Thyroid gland (tissue), 4 donors: ENCODE measurements at regions of chr3 and their contacts with region 1.

Region 1: DNA sequence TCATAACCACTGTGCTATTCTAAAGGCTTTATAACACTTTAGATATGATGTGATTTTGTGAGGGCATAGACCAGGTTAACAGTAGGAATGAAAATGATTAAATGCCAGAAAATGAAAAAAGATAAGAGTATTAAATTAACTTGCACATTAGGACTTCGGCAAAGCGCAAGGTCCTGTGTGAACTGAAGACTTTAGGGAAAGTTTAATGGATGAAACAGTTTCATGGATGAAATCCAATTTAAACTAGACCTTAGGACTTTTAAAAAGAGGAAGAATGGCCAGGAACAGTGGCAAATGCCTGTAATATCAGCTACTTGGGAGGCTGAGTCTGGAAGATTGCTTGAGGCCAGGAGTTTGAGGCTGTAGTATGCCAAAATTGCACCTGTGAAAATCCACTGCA is 8.7 kb downstream of the SLMAP start:
- DNase-seq: no peak
- H3K4me3 ChIP-seq: no peak overlapping the region
- H3K27ac ChIP-seq: no peak overlapping the region
- H3K4me1 ChIP-seq: peaks cover 12 to 17% of the 10 kb centered on the region in 2 donors
- H3K27me3 ChIP-seq: no peaks in the 10 kb centered on the region
- CTCF ChIP-seq: no peak
- POLR2A ChIP-seq: no peak

Region 2: DNA sequence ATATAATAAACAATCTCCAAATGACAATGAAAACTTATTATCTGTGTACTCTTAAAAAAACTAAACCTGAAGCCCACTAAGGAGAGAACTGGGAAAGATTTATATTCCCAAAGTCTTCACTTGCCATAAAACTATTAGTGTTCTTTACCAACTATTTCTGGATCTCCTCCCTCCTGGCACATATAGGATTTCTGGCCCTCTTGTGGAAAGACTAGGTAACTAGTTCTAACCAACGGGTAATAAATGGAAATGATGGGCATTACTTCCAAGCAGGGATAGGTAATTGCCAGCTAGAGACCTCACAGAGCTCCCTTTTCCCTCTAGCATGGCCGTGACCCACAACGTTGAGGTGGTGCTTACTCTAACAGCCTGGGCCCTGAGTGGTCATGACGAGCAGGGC is 330.8 kb before region 1 on chr3:
- intact Hi-C with region 1: no loop called
- DNase-seq: no peak
- H3K4me3 ChIP-seq: no peak overlapping the region
- H3K27ac ChIP-seq: no peak overlapping the region
- H3K4me1 ChIP-seq: no peaks in the 10 kb centered on the region
- H3K27me3 ChIP-seq: no peaks in the 10 kb centered on the region
- CTCF ChIP-seq: peak in 3 of 6 experiments; percentile 27 to 35 (median 34)
- POLR2A ChIP-seq: no peak

Region 3: DNA sequence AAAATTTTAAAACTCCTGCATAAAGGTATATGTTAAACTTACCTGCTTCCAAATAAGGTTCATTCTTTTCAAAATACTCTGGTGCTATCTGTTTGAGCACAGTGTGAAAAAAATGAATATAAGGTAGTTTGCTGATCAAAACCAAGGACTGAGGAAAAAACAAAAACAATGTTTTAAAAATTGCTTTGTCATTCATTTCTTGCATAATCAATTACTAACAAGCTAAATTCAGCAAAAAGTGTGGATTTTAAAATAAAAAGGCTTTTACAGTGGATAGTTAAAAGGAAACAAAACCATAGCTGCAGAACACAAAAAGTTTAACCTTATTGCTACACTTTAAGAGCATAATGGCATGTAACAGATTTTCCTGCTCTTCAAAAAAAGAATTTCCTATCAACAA is 103.4 kb before region 1 on chr3:
- intact Hi-C with region 1: no loop called
- DNase-seq: no peak
- H3K4me3 ChIP-seq: no peak overlapping the region
- H3K27ac ChIP-seq: no peak overlapping the region
- H3K4me1 ChIP-seq: no peaks in the 10 kb centered on the region
- H3K27me3 ChIP-seq: no peaks in the 10 kb centered on the region
- CTCF ChIP-seq: no peak
- POLR2A ChIP-seq: no peak

Region 4: GRCh38 chr3:57815036-57815435 is 50.2 kb after region 1 on chr3:
- intact Hi-C with region 1: loop called (anchors 10 kb)
- DNase-seq: no peak
- H3K4me3 ChIP-seq: no peak overlapping the region
- H3K27ac ChIP-seq: no peak overlapping the region
- H3K4me1 ChIP-seq: peaks cover 9 to 19% of the 10 kb centered on the region in 2 donors
- H3K27me3 ChIP-seq: no peaks in the 10 kb centered on the region
- CTCF ChIP-seq: no peak
- POLR2A ChIP-seq: no peak

Region 5: GRCh38 chr3:58025837-58026569 is 261.2 kb after region 1 on chr3:
- intact Hi-C with region 1: no loop called
- DNase-seq: peak; percentile 97 to 98
- H3K4me3 ChIP-seq: no peak overlapping the region
- H3K27ac ChIP-seq: peak overlapping the region; percentile 93 to 97 (median 96)
- H3K4me1 ChIP-seq: peaks cover 61 to 82% of the 10 kb centered on the region in 2 donors
- H3K27me3 ChIP-seq: no peaks in the 10 kb centered on the region
- CTCF ChIP-seq: no peak
- POLR2A ChIP-seq: peak in 1 of 2 donors; percentile 45